ENCODE measurements at regions of chr4 and their contacts with region 1.

Region 1: GRCh38 chr4:113547487-113548042 is 214.0 kb downstream of the CAMK2D start:
- DNase-seq: peak; percentile 97
- ATAC-seq: peak; percentile 98
- H3K4me3 ChIP-seq: no peak overlapping the region
- H3K27ac ChIP-seq: peak overlapping the region; percentile 18; the same call in 1 of the 2 replicates
- H3K4me1 ChIP-seq: peaks cover 9% of the 10 kb centered on the region
- H3K27me3 ChIP-seq: no peaks in the 10 kb centered on the region
- CTCF ChIP-seq: peak; percentile 96 to 99 (median 98); a peak in 5 of 6 replicates
- EP300 ChIP-seq: peak in 1 of 2 experiments; percentile 94; a peak in 2 of 4 replicates
- POLR2A ChIP-seq: no peak
- RAD21 ChIP-seq: peak; percentile 91

Region 2: DNA sequence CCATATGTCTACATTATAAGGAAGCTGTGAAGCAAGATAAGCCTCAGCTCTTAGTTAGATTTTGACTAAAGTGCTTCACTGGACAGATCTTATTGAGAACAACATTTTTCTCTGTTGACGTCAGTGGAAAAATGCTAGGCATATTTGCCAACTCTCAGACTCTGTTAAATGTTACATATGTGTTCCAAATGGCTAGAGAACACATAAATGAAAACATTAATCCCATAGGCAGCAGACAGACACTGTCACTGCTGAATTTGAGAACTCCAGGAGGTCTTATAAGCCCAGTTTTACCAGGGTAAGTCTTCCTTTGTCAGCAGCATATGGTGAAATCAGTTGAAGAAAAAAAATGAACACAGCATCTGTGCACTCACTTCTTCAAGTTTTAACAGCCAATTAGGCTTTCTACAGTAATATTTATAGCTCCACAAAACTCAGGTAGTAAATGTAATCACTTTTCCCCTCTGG is 27.1 kb after region 1 on chr4:
- CTCF ChIA-PET with region 1: interaction called, 18 read pairs
- POLR2A ChIA-PET with region 1: no interaction called
- RAD21 ChIA-PET with region 1: interaction called, 8 read pairs
- SMC1A ChIA-PET with region 1: interaction called, 5 read pairs
- in situ Hi-C with region 1: no loop called
- intact Hi-C with region 1: no loop called
- DNase-seq: no peak
- ATAC-seq: no peak
- H3K4me3 ChIP-seq: no peak overlapping the region
- H3K27ac ChIP-seq: no peak overlapping the region
- H3K4me1 ChIP-seq: no peaks in the 10 kb centered on the region
- H3K27me3 ChIP-seq: no peaks in the 10 kb centered on the region
- CTCF ChIP-seq: no peak
- EP300 ChIP-seq: no peak
- POLR2A ChIP-seq: no peak
- RAD21 ChIP-seq: no peak

Region 3: GRCh38 chr4:113645771-113646441 is 98.3 kb after region 1 on chr4:
- CTCF ChIA-PET with region 1: interaction called, 10 read pairs
- POLR2A ChIA-PET with region 1: no interaction called
- RAD21 ChIA-PET with region 1: interaction called, 20 read pairs
- SMC1A ChIA-PET with region 1: interaction called, 30 read pairs
- in situ Hi-C with region 1: no loop called
- intact Hi-C with region 1: no loop called
- DNase-seq: no peak
- ATAC-seq: no peak
- H3K4me3 ChIP-seq: no peak overlapping the region
- H3K27ac ChIP-seq: no peak overlapping the region
- H3K4me1 ChIP-seq: peaks cover 7% of the 10 kb centered on the region
- H3K27me3 ChIP-seq: no peaks in the 10 kb centered on the region
- CTCF ChIP-seq: no peak
- EP300 ChIP-seq: no peak
- POLR2A ChIP-seq: no peak
- RAD21 ChIP-seq: no peak

Region 4: GRCh38 chr4:113756005-113756410 is 208.4 kb after region 1 on chr4:
- CTCF ChIA-PET with region 1: interaction called, 26 read pairs
- POLR2A ChIA-PET with region 1: no interaction called
- RAD21 ChIA-PET with region 1: interaction called, 54 read pairs
- SMC1A ChIA-PET with region 1: interaction called, 60 read pairs
- in situ Hi-C with region 1: no loop called
- intact Hi-C with region 1: loop called (anchors 1 kb)
- DNase-seq: peak; percentile 51
- ATAC-seq: peak; percentile 72
- H3K4me3 ChIP-seq: peak overlapping the region; percentile 75; the same call in 1 of the 2 replicates
- H3K27ac ChIP-seq: peak overlapping the region; percentile 72
- H3K4me1 ChIP-seq: no peaks in the 10 kb centered on the region
- H3K27me3 ChIP-seq: no peaks in the 10 kb centered on the region
- CTCF ChIP-seq: no peak
- EP300 ChIP-seq: peak; percentile 84 to 95
- POLR2A ChIP-seq: no peak
- RAD21 ChIP-seq: no peak

Region 5: DNA sequence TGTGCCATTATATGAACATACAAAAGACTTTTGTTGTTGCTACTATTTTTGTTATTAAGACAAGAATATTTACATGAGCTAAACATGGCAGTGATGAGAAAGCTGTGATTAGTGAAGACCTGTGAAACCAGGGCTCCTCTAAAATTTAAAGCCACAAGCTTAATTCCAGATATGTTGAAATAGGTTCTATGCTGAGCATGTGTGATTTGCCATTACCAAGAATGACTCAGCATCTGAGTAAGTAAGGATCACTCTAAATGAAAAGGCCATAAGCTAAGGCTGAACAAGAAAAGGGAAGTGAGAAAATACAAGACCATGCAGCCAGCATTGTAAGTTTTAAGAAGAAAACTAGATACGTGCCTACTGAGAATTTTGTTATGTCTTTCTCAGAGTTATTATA is 289.8 kb after region 1 on chr4:
- CTCF ChIA-PET with region 1: interaction called, 3 read pairs
- POLR2A ChIA-PET with region 1: no interaction called
- RAD21 ChIA-PET with region 1: no interaction called
- SMC1A ChIA-PET with region 1: interaction called, 7 read pairs
- in situ Hi-C with region 1: no loop called
- intact Hi-C with region 1: loop called (anchors 5 kb)
- DNase-seq: peak; percentile 94
- ATAC-seq: peak; percentile 99
- H3K4me3 ChIP-seq: no peak overlapping the region
- H3K27ac ChIP-seq: peak overlapping the region; percentile 92
- H3K4me1 ChIP-seq: peaks cover 18% of the 10 kb centered on the region
- H3K27me3 ChIP-seq: no peaks in the 10 kb centered on the region
- CTCF ChIP-seq: no peak
- EP300 ChIP-seq: peak; percentile 59 to 98; a peak in 3 of 4 replicates
- POLR2A ChIP-seq: no peak
- RAD21 ChIP-seq: no peak

Region 6: DNA sequence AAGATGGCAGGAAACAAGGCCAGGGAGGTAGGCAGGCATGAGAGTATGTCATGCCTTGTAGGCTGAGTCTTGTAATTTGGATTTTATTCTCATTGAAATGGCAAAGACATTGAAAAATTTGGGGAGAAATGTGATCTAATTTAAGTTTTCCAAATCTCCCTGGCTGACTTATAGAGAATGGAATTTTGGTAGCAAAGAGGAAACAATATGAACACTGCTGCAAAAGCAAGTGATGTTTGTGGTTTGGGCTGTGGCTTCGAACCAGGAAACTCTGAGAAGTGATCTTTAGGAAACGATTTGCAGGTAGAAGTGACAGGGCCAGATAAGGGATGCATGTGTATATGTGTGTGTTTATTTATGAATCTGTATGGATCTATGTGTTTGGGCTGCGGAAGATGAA is 396.3 kb after region 1 on chr4:
- CTCF ChIA-PET with region 1: no interaction called
- POLR2A ChIA-PET with region 1: no interaction called
- RAD21 ChIA-PET with region 1: no interaction called
- SMC1A ChIA-PET with region 1: no interaction called
- in situ Hi-C with region 1: no loop called
- intact Hi-C with region 1: no loop called
- DNase-seq: no peak
- ATAC-seq: no peak
- H3K4me3 ChIP-seq: no peak overlapping the region
- H3K27ac ChIP-seq: no peak overlapping the region
- H3K4me1 ChIP-seq: no peaks in the 10 kb centered on the region
- H3K27me3 ChIP-seq: no peaks in the 10 kb centered on the region
- CTCF ChIP-seq: no peak
- EP300 ChIP-seq: no peak
- POLR2A ChIP-seq: no peak
- RAD21 ChIP-seq: no peak

Measured in GM12878 (cell line).